PC-3 (cell line): ENCODE measurements at regions of chr3 and their contacts with region 1.

Region 1: GRCh38 chr3:65672871-65673815 is 365.6 kb downstream of the MAGI1 start:
- DNase-seq: peak; percentile 52
- ATAC-seq: peak; percentile 45
- H3K4me3 ChIP-seq: no peak overlapping the region
- H3K27ac ChIP-seq: no peak overlapping the region
- H3K4me1 ChIP-seq: no peaks in the 10 kb centered on the region
- H3K27me3 ChIP-seq: no peaks in the 10 kb centered on the region
- CTCF ChIP-seq: peak; percentile 71

Region 2: DNA sequence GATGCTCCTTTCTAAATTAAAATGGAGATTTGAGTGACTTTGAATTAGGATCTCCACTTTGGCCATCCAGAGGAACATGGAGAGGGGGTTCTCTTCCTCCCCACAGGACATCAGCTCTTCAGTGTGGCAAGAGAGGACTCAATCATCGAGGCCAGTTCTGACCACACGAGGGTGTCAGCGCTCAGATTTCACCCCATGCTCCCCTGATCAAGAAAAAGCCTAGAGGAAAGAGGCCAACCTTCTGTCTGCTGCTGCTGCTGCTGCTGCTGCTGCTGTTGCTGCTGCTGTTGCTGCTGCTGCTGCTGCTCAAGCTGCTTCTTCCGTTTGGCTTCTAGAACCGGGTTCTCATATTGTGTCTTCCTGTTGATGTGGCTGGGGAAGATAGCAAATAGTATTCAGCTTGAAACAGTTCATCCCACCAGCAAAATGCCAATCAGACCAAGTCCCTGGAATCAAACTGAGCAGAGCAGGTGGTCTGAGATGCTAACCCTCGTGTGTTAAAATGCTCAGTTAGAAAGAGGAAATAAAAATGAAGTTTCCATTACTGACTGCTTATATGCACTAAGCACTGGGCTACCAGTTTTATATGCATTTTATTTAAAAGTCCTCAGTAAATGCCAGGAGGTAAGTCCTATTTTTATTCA is 233.4 kb before region 1 on chr3:
- CTCF ChIA-PET with region 1: interaction called, 12 read pairs
- POLR2A ChIA-PET with region 1: no interaction called
- intact Hi-C with region 1: loop called (anchors 1 kb)
- DNase-seq: peak; percentile 43
- ATAC-seq: peak; percentile 89
- H3K4me3 ChIP-seq: no peak overlapping the region
- H3K27ac ChIP-seq: no peak overlapping the region
- H3K4me1 ChIP-seq: no peaks in the 10 kb centered on the region
- H3K27me3 ChIP-seq: no peaks in the 10 kb centered on the region
- CTCF ChIP-seq: peak; percentile 43

Region 3: GRCh38 chr3:65720989-65721737 is 48.0 kb after region 1 on chr3:
- CTCF ChIA-PET with region 1: no interaction called
- POLR2A ChIA-PET with region 1: no interaction called
- intact Hi-C with region 1: no loop called
- DNase-seq: no peak
- ATAC-seq: no peak
- H3K4me3 ChIP-seq: no peak overlapping the region
- H3K27ac ChIP-seq: no peak overlapping the region
- H3K4me1 ChIP-seq: no peaks in the 10 kb centered on the region
- H3K27me3 ChIP-seq: no peaks in the 10 kb centered on the region
- CTCF ChIP-seq: no peak